Left colon (tissue), 2 donors: ENCODE measurements at regions of chr1 and their contacts with region 1.

Region 1: DNA sequence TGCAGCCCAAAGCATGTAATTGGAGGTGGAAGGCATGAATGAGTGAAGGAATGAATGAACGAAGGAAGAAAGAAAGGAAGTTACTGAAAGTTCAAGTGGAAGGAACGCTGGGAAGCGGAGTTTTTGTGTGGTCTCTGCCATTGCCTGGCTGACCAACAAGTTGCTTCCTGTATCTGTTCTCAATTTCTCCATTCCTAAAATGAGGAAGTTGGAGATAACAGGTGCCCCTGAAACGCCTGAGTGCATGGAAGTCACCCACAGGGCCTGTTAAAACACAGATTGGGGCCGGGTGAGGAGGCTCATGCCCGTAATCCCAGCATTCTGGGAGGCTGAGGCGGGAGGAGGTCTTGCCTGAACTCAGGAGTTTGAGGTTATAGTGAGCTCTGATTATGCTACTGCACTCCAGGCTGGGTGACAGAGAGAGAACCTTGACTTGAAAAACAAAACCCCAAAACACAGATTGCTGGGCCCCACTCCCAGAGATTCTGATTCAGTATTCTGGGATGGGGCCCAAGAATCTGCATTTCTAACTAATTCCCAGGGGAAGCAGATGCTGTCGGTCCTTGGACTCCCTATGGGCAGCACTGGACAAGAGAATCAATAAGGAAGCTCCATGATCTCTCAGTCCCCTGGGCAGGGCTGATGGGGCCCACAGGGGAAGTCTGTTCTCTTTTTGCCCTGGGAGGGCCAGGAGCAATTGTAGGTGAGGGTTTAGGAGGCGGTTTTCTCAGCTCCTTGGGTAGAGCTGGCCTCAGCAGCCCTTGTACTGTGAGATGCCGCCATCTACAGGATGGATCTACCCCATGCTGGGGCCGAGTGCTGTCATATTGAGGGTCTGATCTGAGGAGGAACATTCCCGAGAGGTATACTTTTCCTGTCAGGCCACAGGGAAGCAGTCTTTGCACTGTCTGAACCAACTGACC is 3.3 kb upstream of the CNR2 start:
- DNase-seq: peak; percentile 76 to 81
- ATAC-seq: peak; percentile 78

Region 2: GRCh38 chr1:23772049-23772853 is 144.2 kb before region 1 on chr1:
- intact Hi-C with region 1: loop called in 1 of 2 experiments (anchors 5 kb)
- DNase-seq: peak; percentile 77 to 92
- ATAC-seq: peak; percentile 90

Region 3: DNA sequence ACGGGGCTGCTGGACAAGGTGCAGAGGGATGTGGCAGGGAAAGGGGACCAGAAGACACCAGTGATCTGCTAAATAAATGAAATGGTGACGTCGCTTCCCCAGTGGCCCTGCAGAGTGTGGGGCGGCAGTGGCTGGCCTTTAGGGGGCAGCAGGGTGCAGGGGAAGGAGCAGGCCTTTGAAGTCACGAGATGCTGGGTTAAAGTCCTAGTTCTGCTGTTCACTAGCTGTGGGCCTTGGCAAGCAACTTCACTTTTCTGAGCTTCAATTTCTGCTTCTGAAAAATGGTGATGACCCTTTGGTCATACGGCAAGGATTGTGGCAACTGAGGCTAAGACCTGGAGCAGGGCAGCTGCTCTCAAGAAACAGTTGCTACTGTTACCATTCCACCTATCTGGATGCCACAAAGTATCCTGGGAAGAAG is 106.7 kb before region 1 on chr1:
- intact Hi-C with region 1: loop called in 1 of 2 experiments (anchors 10 kb)
- DNase-seq: peak; percentile 84 to 89
- ATAC-seq: peak; percentile 90

Region 4: DNA sequence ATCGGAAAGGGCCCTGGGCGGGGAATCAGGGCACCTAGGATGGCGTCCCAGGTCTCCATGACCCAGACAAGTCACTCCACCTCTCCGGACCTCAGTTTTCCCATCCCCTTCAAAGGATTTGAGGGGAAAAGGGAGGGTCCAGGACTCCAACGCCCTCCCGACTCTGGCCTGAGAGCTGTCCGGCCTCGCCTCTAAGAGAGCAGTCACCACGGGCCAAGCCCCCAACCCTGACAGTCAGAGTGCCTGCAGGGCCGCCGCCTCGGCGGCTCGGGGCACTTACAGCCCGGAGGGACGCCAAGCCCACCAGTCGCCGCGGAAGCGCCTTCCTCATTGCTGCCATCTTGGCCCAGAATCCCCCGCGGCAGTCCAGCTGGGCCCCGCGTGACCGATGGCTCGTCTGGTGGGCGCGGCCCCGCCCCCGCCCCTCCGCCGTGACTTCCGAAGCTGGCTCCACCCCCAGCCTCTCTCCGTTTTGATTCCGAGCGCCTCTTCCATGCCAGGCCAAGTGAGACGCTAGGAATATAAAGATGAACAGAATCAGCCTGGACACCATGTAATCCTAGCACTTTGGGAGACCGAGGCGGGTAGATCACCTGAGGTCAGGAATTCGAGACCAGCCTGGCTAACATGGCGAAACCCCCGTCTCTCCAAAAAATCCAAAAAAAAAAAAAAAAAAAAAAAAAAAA is 91.3 kb before region 1 on chr1 and contains the start of gene HMGCL:
- intact Hi-C with region 1: no loop called
- DNase-seq: peak; percentile 91 to 94
- ATAC-seq: peak; percentile 99
- total RNA-seq, gene HMGCL: 85.3 to 95.1 TPM

Region 5: DNA sequence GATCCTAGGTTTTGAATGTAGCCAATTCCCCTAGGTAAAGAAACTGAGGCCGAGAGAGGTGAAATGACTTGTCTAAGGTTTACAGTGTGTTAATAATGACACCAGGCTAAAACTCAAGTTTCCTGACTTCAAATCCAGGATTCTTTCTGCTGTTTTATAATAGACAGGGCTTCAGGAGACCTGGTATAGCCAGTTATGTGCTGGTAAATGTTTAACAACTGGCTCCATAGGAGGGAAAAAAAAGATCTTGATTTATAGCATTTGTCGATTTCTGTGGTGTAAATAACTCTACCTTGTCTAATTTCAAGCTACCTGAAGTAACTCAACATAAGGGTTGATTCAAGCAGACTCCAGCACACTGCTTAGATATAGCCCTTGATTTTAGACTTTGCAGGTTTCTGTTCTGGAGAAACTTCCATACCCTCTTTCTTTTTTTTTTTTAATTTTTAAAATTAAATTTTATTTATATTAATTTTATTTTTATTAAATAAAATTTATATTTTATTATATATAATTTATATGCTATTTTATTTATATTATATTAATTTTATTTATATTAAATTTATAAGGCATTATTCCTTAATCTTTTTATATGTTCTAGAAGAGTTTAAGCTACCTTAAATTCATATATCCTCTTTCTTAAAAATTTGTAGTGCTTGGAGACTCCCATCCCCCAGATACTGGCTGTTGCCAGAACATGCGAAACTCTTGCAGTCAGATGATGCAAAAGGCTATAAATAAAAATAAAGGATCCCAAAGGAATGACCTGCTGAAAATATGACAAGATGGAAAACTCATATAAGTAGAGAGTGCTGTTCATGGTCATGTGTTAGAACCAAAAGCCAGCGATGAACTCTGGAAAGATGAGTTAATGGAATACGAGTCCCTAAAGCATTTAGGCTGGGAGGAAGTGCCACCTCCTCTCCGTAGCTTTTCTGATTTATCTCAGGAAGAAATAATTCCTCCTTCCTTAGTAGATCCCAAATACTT is 99.0 kb after region 1 on chr1:
- intact Hi-C with region 1: no loop called
- DNase-seq: no peak
- ATAC-seq: no peak

Region 6: GRCh38 chr1:24364975-24365678 is 448.7 kb after region 1 on chr1:
- intact Hi-C with region 1: no loop called
- DNase-seq: peak in 1 of 2 donors; percentile 28
- ATAC-seq: peak; percentile 51